SK-N-SH (cell line): ENCODE measurements at regions of chr19 and their contacts with region 1.

Region 1: DNA sequence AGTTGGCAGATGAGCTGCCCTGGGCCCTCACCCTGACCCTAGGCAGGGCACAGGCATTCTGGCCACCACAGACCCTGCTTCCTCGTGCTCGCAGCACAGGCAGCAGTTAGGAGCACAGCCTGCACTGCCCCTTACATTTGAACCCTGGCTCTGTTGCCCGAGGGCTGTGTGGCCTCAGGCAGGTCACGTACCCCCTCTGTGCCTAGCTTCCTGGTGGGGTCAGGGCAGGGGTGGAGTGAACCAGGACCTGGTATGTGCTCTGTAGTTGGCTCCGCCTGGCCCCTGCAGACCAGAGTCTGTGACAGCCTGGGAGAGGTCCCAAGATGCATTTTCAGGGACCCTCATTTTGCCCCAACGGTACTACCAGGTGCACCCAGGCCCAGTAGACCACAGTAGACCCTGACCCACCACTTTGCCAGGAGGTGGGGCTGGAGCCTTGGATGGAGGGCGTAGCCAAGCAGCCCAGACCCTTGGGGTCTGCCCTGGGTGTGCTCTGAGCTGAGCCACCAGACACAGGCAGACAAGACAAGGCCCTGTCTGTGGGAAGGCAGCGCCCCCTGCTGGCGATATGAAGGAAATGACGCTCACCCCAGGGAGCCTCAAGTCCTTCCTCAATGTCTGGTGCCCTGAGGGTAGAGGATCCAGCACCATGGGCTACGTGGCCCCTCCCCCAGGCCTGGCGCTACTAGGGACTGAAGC is 9.1 kb downstream of the LYL1 start:
- DNase-seq: peak; percentile 92
- H3K4me3 ChIP-seq: no peak overlapping the region; a peak in 1 of 4 replicates
- H3K27ac ChIP-seq: peak overlapping the region; percentile 27 to 99; a peak in 3 of 4 replicates
- H3K4me1 ChIP-seq: peaks cover 19 to 76% of the 10 kb centered on the region in 2 experiments
- H3K27me3 ChIP-seq: no peaks in the 10 kb centered on the region
- CTCF ChIP-seq: peak; percentile 88
- EP300 ChIP-seq: no peak
- RAD21 ChIP-seq: peak; percentile 98

Region 2: DNA sequence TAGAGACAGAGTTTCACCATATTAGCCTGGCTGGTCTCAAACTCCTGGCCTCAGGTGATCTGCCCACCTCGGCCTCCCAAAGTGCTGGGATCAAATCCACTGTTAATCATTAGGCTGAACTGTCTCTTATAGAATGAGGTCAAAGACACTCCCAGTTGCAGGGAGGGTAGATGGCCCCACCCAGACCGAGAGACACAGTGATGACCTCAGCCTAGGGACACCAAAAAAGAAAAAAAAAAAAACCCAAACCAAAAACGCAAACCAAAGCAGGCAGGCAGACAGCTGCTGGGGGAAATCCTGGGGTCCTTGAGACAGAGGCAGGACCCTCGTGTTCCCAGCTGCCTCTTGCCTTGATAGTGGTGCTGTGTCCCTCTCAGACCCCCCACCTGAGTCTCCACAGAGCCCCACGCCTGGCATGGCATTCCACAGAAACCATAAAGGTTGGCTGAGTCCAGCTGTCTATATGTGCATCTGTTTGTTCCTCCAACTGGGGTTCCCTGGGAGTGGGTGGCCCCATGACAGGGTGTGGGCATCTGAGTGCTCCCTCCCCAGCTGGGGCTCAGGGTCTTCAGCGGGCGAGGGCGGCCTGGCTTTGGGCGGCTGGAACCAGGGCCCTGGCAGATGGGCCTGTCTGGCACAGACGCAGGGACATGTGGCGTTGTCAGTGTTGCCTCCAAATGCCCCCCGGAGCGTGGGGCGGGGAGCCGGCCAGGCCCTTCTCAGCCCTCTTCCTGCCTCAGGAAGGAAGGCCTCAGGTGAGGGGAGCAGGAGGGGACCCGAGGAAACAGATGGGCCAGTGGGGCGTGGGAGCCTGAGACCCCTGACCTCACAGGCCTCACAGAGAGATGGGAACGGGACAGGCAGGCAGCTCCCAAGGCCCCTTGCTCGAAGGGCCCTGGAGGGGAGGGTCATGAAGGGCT is 119.0 kb before region 1 on chr19:
- CTCF ChIA-PET with region 1: interaction called, 603 read pairs
- POLR2A ChIA-PET with region 1: interaction called, 12 read pairs
- DNase-seq: peak; percentile 78
- H3K4me3 ChIP-seq: no peak overlapping the region
- H3K27ac ChIP-seq: peak overlapping the region in 1 of 2 experiments; percentile 92; a peak in 2 of 4 replicates
- H3K4me1 ChIP-seq: peaks cover 2 to 27% of the 10 kb centered on the region in 2 experiments; a peak in 2 of 4 replicates
- H3K27me3 ChIP-seq: no peaks in the 10 kb centered on the region
- CTCF ChIP-seq: no peak
- EP300 ChIP-seq: peak in 1 of 2 experiments; percentile 84; a peak in 2 of 4 replicates
- RAD21 ChIP-seq: peak; percentile 28

Region 3: GRCh38 chr19:13007292-13008045 is 86.1 kb before region 1 on chr19:
- CTCF ChIA-PET with region 1: interaction called, 26 read pairs
- POLR2A ChIA-PET with region 1: no interaction called
- DNase-seq: peak; percentile 42
- H3K4me3 ChIP-seq: no peak overlapping the region
- H3K27ac ChIP-seq: no peak overlapping the region
- H3K4me1 ChIP-seq: no peaks in the 10 kb centered on the region
- H3K27me3 ChIP-seq: no peaks in the 10 kb centered on the region
- CTCF ChIP-seq: peak; percentile 20; the same call in 1 of the 2 replicates
- EP300 ChIP-seq: no peak
- RAD21 ChIP-seq: no peak

Region 4: DNA sequence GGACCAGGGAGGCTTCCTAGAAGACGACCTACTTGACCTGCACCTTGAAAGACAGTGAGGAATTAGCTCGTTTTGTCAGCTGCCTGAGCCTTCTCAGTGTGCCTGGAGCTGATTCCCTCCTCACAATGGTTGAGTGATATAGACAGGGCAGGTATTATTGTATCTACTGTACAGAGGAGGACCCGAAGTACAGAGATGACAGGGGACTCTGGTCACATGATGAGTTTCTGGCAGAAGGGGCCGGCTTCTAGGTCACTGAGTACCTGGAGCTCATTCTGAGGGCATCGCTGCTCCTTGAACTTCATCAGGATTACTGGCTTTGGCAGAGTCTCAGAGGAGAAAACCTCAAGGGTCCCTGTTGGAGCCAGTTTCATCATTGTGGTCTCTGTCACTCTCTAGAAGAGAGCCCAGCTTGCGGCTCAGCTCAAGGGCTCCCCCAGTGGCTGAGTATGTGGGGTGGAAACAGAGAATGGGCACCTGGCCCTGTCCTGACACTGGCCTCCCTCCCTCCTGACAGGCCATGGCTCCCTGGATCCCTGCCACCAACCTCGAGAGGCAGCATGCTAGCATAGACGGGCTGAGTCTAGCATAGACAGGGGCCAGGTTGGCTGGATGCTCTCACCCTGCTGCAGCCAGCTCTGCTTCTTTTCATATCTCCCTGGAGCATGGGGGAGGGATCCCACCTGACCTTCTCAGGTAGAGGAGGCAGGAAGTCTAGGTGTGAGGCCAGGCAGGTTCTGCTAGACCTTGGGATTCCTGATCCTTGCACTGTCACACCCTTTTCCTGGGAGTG is 59.5 kb before region 1 on chr19:
- CTCF ChIA-PET with region 1: interaction called, 82 read pairs
- POLR2A ChIA-PET with region 1: no interaction called
- DNase-seq: peak; percentile 77
- H3K4me3 ChIP-seq: peak overlapping the region in 1 of 2 experiments; percentile 13; a peak in 1 of 4 replicates
- H3K27ac ChIP-seq: peak overlapping the region in 1 of 2 experiments; percentile 43; a peak in 1 of 4 replicates
- H3K4me1 ChIP-seq: peaks cover 45 to 55% of the 10 kb centered on the region in 2 experiments
- H3K27me3 ChIP-seq: no peaks in the 10 kb centered on the region
- CTCF ChIP-seq: peak; percentile 69
- EP300 ChIP-seq: no peak
- RAD21 ChIP-seq: peak; percentile 63

Region 5: GRCh38 chr19:13104360-13104847 is 10.8 kb after region 1 on chr19:
- CTCF ChIA-PET with region 1: interaction called, 76 read pairs
- POLR2A ChIA-PET with region 1: no interaction called
- DNase-seq: peak; percentile 81
- H3K4me3 ChIP-seq: no peak overlapping the region
- H3K27ac ChIP-seq: no peak overlapping the region
- H3K4me1 ChIP-seq: peaks cover 0 to 24% of the 10 kb centered on the region in 2 experiments; a peak in 3 of 4 replicates
- H3K27me3 ChIP-seq: no peaks in the 10 kb centered on the region
- CTCF ChIP-seq: peak; percentile 54
- EP300 ChIP-seq: no peak
- RAD21 ChIP-seq: peak; percentile 32; the same call in 1 of the 2 replicates

Region 6: DNA sequence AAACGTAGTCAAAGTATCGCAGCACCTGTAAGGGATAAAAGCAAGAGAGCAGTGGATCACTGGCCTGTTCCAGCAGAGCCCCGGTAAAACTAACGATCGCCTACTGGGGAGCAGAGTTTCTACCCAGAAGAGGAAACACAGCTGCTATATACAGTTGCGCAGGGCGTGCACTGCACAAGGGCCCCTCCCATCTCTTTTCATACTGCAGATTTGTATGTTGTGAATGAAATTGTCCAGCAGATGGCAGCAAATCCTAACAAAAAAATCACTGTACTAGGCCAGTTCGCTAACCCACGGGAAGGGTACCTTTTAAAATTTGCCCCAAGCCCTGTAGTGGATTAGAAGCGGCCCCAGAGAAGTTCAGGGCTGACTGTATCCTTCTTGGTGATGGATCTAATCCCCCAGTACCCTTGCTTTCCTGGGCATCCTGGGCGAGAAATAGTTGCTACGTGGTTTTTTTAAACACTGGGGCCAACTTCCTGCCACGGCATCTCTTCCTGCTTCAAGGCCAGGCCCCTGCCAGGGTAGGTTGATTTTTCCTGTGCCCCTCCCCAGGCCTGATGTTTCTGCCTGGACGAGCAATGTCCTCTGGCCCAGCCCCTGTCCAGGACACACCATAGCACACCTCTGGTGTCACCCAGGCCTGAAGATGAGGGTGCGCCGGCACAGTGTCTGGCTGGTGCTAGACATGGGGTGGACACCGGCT is 183.7 kb after region 1 on chr19:
- CTCF ChIA-PET with region 1: no interaction called
- POLR2A ChIA-PET with region 1: no interaction called
- DNase-seq: peak; percentile 76
- H3K4me3 ChIP-seq: no peak overlapping the region; a peak in 1 of 4 replicates
- H3K27ac ChIP-seq: no peak overlapping the region
- H3K4me1 ChIP-seq: no peaks in the 10 kb centered on the region
- H3K27me3 ChIP-seq: peaks cover 35% of the 10 kb centered on the region
- CTCF ChIP-seq: peak; percentile 68
- EP300 ChIP-seq: no peak
- RAD21 ChIP-seq: peak; percentile 85